ENCODE measurements at regions of chr3 and their contacts with region 1.

Region 1: GRCh38 chr3:61882253-61882652 is 320.9 kb downstream of the PTPRG start:
- DNase-seq: no peak
- H3K4me3 ChIP-seq: no peak overlapping the region
- H3K27ac ChIP-seq: no peak overlapping the region
- H3K4me1 ChIP-seq: no peaks in the 10 kb centered on the region
- H3K27me3 ChIP-seq: no peaks in the 10 kb centered on the region
- CTCF ChIP-seq: no peak
- POLR2A ChIP-seq: no peak

Region 2: DNA sequence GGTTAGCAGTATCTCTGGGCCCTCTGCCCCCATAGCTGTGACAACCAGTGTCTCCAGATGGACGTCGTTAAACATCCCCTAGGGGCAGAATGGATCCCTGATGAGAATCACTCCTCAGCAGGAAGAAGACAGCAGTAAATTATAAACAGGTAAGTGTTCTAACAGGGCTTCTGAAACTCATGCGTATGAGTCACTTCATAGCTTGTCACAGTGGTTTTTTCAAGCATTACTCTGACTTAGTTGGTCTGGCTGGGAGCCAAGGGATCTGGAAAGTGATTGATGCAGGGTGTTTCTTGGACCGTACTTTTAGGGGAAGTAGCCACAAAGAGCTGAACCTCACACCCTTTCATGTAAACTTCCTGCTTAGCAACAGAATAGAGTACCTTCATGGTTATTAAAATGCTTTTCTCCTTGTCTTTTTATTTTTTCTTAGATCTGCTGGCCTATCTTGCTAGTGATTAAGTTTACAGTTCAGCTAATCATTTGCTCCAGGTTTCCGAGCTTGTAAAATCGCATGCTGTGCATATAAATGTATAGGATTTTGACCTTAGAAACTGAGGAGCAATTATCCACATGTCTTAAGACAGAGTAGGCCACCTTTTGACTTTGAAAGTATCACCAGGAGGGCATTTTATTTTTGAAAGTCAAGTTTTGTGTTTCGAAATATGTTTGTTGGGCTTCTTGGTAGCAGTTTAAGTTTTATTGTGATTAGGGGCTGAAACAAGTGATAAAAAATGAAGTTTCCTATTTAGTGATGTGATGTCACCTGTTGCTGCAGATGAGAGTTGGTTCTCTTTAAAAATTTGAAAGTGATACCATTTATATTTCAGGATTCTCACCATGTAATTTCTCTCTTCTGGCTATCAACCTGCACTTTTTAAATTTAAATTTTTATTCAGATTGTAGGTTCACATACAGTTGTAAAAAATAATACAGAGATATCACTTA is 13.0 kb after region 1 on chr3:
- CTCF ChIA-PET with region 1: interaction called, 10 read pairs
- POLR2A ChIA-PET with region 1: no interaction called
- dilution Hi-C with region 1: no loop called
- intact Hi-C with region 1: no loop called
- DNase-seq: peak; percentile 93
- H3K4me3 ChIP-seq: no peak overlapping the region
- H3K27ac ChIP-seq: no peak overlapping the region
- H3K4me1 ChIP-seq: peaks cover 11% of the 10 kb centered on the region
- H3K27me3 ChIP-seq: no peaks in the 10 kb centered on the region
- CTCF ChIP-seq: no peak
- POLR2A ChIP-seq: no peak

Region 3: GRCh38 chr3:62188681-62189383 is 306.6 kb after region 1 on chr3:
- CTCF ChIA-PET with region 1: no interaction called
- POLR2A ChIA-PET with region 1: no interaction called
- dilution Hi-C with region 1: no loop called
- intact Hi-C with region 1: no loop called
- DNase-seq: peak; percentile 80
- H3K4me3 ChIP-seq: no peak overlapping the region
- H3K27ac ChIP-seq: no peak overlapping the region
- H3K4me1 ChIP-seq: peaks cover 5% of the 10 kb centered on the region
- H3K27me3 ChIP-seq: no peaks in the 10 kb centered on the region
- CTCF ChIP-seq: peak; percentile 75 to 84
- POLR2A ChIP-seq: no peak